Heart left ventricle (tissue), 16 donors: ENCODE measurements at regions of chr1 and their contacts with region 1.

Region 1: DNA sequence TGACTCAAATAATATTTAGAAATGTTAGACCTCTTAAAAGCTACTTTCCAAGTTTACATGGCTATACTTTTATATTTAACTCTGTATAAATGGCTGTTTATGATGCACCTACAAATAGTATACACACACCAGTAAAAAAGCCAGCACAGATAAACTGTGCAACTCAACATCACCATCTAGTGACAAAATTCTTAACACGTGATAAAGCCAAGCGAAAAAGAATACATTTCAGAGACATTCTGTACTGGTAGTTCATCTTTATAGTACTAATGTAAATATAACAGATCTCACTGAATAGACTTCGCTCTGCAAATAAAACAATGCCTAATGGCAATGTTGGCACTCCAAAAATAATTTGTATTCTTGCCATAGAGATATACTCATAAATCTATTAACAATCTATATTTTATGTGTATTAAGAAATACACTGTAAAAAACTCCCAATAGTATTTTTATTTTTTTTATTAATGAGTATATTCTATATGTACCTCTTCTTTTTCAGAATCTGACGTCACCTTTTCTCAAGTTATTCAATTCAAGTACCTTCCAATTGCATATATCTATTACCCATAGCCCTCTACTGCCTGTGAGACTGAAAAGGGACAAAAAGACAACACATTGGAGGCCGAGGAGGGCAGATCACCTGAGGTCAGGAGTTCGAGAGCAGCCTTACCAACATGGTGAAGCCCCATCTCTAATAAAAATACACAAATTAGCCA is 100.2 kb downstream of the DPYD start:
- DNase-seq: no peak
- ATAC-seq: peak in 1 of 4 donors; percentile 59
- H3K4me3 ChIP-seq: no peak overlapping the region
- H3K27ac ChIP-seq: no peak overlapping the region
- H3K4me1 ChIP-seq: peaks cover 0 to 11% (median 1%) of the 10 kb centered on the region in 12 donors
- H3K27me3 ChIP-seq: no peaks in the 10 kb centered on the region
- CTCF ChIP-seq: peak; percentile 31 to 66 (median 56)
- POLR2A ChIP-seq: no peak

Region 2: GRCh38 chr1:96966536-96967138 is 854.0 kb before region 1 on chr1:
- intact Hi-C with region 1: loop called in 1 of 10 experiments (anchors 10 kb)
- DNase-seq: peak; percentile 53 to 79 (median 67)
- ATAC-seq: peak; percentile 68 to 83 (median 77)
- H3K4me3 ChIP-seq: peak overlapping the region in 2 of 12 donors; percentile 16 to 29
- H3K27ac ChIP-seq: no peak overlapping the region
- H3K4me1 ChIP-seq: peaks cover 0 to 6% (median 0%) of the 10 kb centered on the region in 12 donors
- H3K27me3 ChIP-seq: peaks cover 0 to 12% (median 0%) of the 10 kb centered on the region in 9 donors
- CTCF ChIP-seq: peak; percentile 82 to 96 (median 92)
- POLR2A ChIP-seq: no peak